ENCODE measurements at regions of chr7 and their contacts with region 1.

Region 1: GRCh38 chr7:32479574-32480200 is 10.5 kb downstream of the LSM5 start:
- DNase-seq: no peak
- H3K4me3 ChIP-seq: no peak overlapping the region
- H3K27ac ChIP-seq: no peak overlapping the region
- H3K27me3 ChIP-seq: no peaks in the 10 kb centered on the region
- CTCF ChIP-seq: peak in 55 of 56 donors; percentile 20 to 72 (median 59)

Region 2: GRCh38 chr7:32218154-32218467 is 261.6 kb before region 1 on chr7:
- intact Hi-C with region 1: loop called (anchors 10 kb)
- DNase-seq: peak in 2 of 10 donors; percentile 7 to 31
- H3K4me3 ChIP-seq: no peak overlapping the region
- H3K27ac ChIP-seq: peak overlapping the region in 1 of 59 donors; percentile 42
- H3K27me3 ChIP-seq: peaks cover 0 to 20% (median 0%) of the 10 kb centered on the region in 45 donors
- CTCF ChIP-seq: no peak

Region 3: DNA sequence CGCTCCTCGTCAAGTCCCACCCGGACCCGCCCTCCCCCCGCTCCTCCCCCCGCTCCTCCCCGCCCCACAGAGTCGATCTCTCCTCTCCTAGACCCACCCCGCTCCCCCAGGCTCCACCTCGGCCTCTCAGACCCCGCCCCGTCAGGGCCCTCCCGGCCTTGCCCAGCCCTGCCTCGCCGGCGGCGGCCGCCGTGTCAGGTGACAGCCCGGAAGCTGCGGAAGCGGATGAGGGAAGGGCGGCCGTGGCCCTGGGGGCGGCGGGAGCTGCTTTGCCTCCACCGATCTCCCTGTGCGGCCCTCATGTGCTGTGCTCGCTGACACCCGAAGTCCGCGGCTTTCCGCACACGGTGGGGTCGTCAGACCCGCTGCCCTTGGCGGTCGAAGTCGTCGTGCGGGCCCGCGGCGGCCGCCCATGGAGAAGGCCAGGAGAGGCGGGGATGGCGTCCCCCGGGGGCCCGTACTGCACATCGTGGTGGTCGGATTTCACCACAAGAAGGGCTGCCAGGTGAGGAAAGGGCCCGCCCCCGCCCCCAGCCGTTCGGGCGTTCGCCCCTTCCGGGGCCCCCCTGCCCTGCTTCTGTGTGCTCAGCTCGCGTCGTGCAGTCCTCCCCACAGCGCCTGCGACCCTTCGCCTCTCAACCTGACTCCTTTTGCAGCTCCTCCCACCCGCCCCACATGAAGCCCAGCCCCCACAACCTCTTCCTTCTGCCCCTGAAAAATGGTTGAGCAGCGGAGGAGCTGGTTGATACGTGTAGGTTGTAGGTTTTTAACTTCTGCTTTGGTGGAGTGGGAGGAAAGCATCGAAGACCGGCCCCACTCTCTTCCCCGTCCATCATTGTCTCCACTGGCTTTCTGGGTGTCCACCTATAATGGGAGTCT is 15.8 kb after region 1 on chr7 and contains the start of gene AVL9:
- intact Hi-C with region 1: no loop called
- DNase-seq: peak; percentile 93 to 100 (median 98)
- H3K4me3 ChIP-seq: peak within 1 kb of the TSS; percentile 69 to 99 (median 94)
- H3K27ac ChIP-seq: peak within 1 kb of the TSS; percentile 68 to 99 (median 95)
- H3K27me3 ChIP-seq: no peaks in the 10 kb centered on the region
- CTCF ChIP-seq: peak in 8 of 56 donors; percentile 4 to 30 (median 20)
- total RNA-seq, gene AVL9: 38.2 to 86.2 (median 63.0) TPM

Region 4: DNA sequence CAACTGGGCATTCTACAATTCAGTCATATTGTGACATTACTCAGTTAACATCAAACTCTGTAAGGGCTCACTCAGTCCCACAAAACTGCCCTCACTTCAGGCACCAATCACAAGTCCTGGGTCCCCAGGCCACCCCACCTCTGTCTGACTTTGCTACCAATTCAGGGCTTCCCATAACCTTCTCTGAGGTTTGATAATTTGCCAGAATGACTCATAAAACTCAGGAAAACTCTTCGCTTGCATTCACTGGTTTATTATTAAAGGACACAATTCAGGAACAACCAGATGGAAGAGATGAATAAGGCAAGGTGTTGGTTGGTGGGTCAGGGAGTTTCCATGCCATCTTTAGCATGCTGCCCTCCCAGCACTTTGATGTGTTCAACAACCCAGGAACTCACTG is 56.9 kb after region 1 on chr7:
- intact Hi-C with region 1: no loop called
- DNase-seq: no peak
- H3K4me3 ChIP-seq: no peak overlapping the region
- H3K27ac ChIP-seq: peak overlapping the region in 7 of 59 donors; percentile 1 to 65 (median 12)
- H3K27me3 ChIP-seq: no peaks in the 10 kb centered on the region
- CTCF ChIP-seq: no peak

Region 5: GRCh38 chr7:32928785-32929298 is 449.2 kb after region 1 on chr7:
- intact Hi-C with region 1: no loop called
- DNase-seq: no peak
- H3K4me3 ChIP-seq: no peak overlapping the region
- H3K27ac ChIP-seq: no peak overlapping the region
- H3K27me3 ChIP-seq: no peaks in the 10 kb centered on the region
- CTCF ChIP-seq: no peak